PC-9 (cell line): ENCODE measurements at regions of chr2 and their contacts with region 1.

Region 1: GRCh38 chr2:30711646-30712085 is 95.6 kb downstream of the CAPN13 start:
- DNase-seq: peak; percentile 77 to 82
- H3K4me3 ChIP-seq: no peak overlapping the region
- H3K27ac ChIP-seq: no peak overlapping the region
- H3K4me1 ChIP-seq: no peaks in the 10 kb centered on the region
- H3K27me3 ChIP-seq: no peaks in the 10 kb centered on the region
- CTCF ChIP-seq: peak; percentile 99

Region 2: GRCh38 chr2:30208452-30208851 is 503.2 kb before region 1 on chr2:
- CTCF ChIA-PET with region 1: interaction called, 13 read pairs
- POLR2A ChIA-PET with region 1: no interaction called
- intact Hi-C with region 1: loop called (anchors 1 kb)
- DNase-seq: peak; percentile 56 to 59
- H3K4me3 ChIP-seq: no peak overlapping the region
- H3K27ac ChIP-seq: no peak overlapping the region
- H3K4me1 ChIP-seq: no peaks in the 10 kb centered on the region
- H3K27me3 ChIP-seq: no peaks in the 10 kb centered on the region
- CTCF ChIP-seq: peak; percentile 97

Region 3: DNA sequence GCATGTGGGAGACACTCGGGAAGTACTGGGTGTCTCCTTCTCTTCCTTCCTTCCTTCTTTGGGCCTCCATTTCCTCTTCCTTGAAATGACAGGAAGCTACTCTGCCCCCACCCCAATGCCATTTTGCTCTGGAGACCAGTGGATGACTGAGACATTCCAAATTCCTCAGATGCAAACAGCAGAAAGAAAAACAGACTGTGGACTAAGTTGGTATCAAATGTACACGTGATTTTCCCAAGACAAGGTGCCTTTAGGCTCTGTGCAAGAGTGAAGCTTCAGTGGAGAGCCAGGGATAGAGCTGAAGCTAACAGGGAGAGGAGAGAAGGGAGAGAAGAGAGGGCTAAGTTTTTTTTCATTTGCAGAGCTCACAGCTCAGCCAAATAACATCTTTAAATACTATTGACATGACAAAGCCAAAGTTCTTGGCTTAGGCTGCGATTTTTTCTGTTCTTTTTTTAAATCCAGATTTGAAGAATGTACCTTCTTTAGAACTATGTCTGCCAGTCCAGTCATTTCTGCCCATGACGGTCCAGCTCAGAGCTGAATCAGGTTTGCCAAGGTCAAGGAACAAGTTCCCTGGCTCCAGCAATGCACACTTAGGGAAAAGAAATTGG is 349.1 kb before region 1 on chr2:
- CTCF ChIA-PET with region 1: no interaction called
- POLR2A ChIA-PET with region 1: no interaction called
- intact Hi-C with region 1: loop called (anchors 1 kb)
- DNase-seq: peak; percentile 45 to 91
- H3K4me3 ChIP-seq: no peak overlapping the region
- H3K27ac ChIP-seq: peak overlapping the region; percentile 73
- H3K4me1 ChIP-seq: peaks cover 35% of the 10 kb centered on the region
- H3K27me3 ChIP-seq: no peaks in the 10 kb centered on the region
- CTCF ChIP-seq: no peak

Region 4: GRCh38 chr2:30541680-30542079 is 170.0 kb before region 1 on chr2:
- CTCF ChIA-PET with region 1: no interaction called
- POLR2A ChIA-PET with region 1: no interaction called
- intact Hi-C with region 1: no loop called
- DNase-seq: no peak
- H3K4me3 ChIP-seq: no peak overlapping the region
- H3K27ac ChIP-seq: no peak overlapping the region
- H3K4me1 ChIP-seq: no peaks in the 10 kb centered on the region
- H3K27me3 ChIP-seq: no peaks in the 10 kb centered on the region
- CTCF ChIP-seq: no peak

Region 5: GRCh38 chr2:30800159-30800558 is 88.5 kb after region 1 on chr2:
- CTCF ChIA-PET with region 1: interaction called, 13 read pairs
- POLR2A ChIA-PET with region 1: no interaction called
- intact Hi-C with region 1: no loop called
- DNase-seq: no peak
- H3K4me3 ChIP-seq: no peak overlapping the region
- H3K27ac ChIP-seq: no peak overlapping the region
- H3K4me1 ChIP-seq: peaks cover 9% of the 10 kb centered on the region
- H3K27me3 ChIP-seq: no peaks in the 10 kb centered on the region
- CTCF ChIP-seq: no peak

Region 6: GRCh38 chr2:31170071-31170698 is 458.5 kb after region 1 on chr2:
- CTCF ChIA-PET with region 1: interaction called, 8 read pairs
- POLR2A ChIA-PET with region 1: no interaction called
- intact Hi-C with region 1: loop called (anchors 1 kb)
- DNase-seq: peak; percentile 42 to 53
- H3K4me3 ChIP-seq: no peak overlapping the region
- H3K27ac ChIP-seq: no peak overlapping the region
- H3K4me1 ChIP-seq: no peaks in the 10 kb centered on the region
- H3K27me3 ChIP-seq: no peaks in the 10 kb centered on the region
- CTCF ChIP-seq: peak; percentile 99

Region 7: DNA sequence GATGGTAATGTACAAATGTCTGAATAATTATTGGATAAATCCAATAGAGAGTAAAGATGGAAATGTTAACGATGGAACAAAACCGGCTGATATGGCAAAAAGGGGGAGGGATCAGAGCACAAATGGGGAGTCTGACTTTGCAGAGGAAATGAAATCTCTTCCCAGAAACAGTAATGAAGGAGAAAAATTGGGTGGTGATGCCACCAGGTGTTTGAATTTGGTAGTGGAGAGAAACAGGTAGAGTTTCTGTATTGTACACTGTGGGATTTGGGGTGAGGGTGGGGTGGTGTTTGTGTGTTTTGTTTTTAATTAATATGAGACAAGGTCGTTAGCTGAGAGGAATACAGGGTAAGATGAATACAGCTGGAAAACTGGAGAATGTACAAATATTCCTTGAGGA is 723.2 kb after region 1 on chr2:
- CTCF ChIA-PET with region 1: interaction called, 3 read pairs
- POLR2A ChIA-PET with region 1: no interaction called
- intact Hi-C with region 1: loop called (anchors 10 kb)
- DNase-seq: no peak
- H3K4me3 ChIP-seq: no peak overlapping the region
- H3K27ac ChIP-seq: no peak overlapping the region
- H3K4me1 ChIP-seq: peaks cover 15% of the 10 kb centered on the region
- H3K27me3 ChIP-seq: no peaks in the 10 kb centered on the region
- CTCF ChIP-seq: peak; percentile 49; the same call in 1 of the 2 replicates